ENCODE measurements at regions of chr19 and their contacts with region 1.

Region 1: GRCh38 chr19:41541990-41542584 is 33.9 kb upstream of the CEACAM21 start:
- DNase-seq: peak; percentile 53 to 71 (median 64)
- ATAC-seq: peak; percentile 59
- H3K4me3 ChIP-seq: no peak overlapping the region
- H3K4me3 Mint-ChIP-seq: peak overlapping the region; percentile 51 to 77 (median 62)
- H3K27ac ChIP-seq: peak overlapping the region; percentile 26
- H3K27ac Mint-ChIP-seq: peak overlapping the region; percentile 44 to 97 (median 88)
- H3K4me1 ChIP-seq: peaks cover 38 to 42% of the 10 kb centered on the region in 2 donors
- H3K4me1 Mint-ChIP-seq: peaks cover 38 to 57% (median 52%) of the 10 kb centered on the region in 7 donors
- H3K27me3 ChIP-seq: no peaks in the 10 kb centered on the region
- H3K27me3 Mint-ChIP-seq: no peaks in the 10 kb centered on the region

Region 2: DNA sequence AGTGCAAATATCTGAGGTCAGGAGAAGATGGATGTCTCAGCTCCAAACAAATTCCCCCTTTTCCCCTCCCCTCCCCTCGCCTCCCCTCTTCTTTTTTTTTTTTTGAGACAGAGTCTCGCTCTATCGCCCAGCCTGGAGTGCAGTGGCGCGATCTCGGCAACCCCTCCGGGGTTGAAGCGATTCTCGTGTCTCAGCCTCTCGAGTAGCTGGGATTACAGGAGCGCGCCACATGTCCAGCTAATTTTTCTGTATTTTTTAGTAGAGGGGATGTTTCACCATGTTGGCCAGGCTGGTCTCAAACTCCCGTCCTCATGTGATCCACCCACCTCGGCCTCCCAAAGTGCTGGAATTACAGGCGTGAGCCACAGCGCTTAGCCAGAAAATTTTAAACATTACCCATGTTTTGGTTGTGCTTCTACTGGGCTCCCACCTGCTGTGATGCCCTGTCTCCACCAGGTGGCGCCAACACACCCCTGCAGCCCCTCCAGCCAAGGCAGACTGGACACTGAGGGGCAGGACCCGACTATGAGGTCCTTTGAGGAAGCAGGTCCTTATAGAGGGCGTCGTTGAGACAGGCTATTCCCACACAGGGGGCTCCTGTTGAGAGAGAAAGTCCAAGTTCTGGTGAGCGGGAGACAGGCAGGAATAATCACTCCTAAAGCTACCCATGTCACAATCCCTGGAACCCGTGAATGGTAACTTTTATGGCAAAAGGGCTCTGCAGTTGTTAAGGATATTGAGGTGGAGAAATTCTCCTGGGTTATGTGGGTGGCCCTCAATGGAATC is 92.8 kb before region 1 on chr19:
- CTCF ChIA-PET with region 1: interaction called, 19 read pairs
- POLR2A ChIA-PET with region 1: interaction called, 5 read pairs
- intact Hi-C with region 1: loop called (anchors 1 kb)
- DNase-seq: peak; percentile 48 to 78 (median 67)
- ATAC-seq: peak; percentile 97
- H3K4me3 ChIP-seq: peak overlapping the region; percentile 41
- H3K4me3 Mint-ChIP-seq: peak overlapping the region; percentile 69 to 86 (median 80)
- H3K27ac ChIP-seq: no peak overlapping the region
- H3K27ac Mint-ChIP-seq: peak overlapping the region in 5 of 9 donors; percentile 59 to 80 (median 67)
- H3K4me1 ChIP-seq: peaks cover 0 to 10% of the 10 kb centered on the region in 2 donors
- H3K4me1 Mint-ChIP-seq: peaks cover 7 to 32% (median 13%) of the 10 kb centered on the region in 7 donors
- H3K27me3 ChIP-seq: no peaks in the 10 kb centered on the region
- H3K27me3 Mint-ChIP-seq: peaks cover 0 to 3% (median 0%) of the 10 kb centered on the region in 5 donors

Region 3: DNA sequence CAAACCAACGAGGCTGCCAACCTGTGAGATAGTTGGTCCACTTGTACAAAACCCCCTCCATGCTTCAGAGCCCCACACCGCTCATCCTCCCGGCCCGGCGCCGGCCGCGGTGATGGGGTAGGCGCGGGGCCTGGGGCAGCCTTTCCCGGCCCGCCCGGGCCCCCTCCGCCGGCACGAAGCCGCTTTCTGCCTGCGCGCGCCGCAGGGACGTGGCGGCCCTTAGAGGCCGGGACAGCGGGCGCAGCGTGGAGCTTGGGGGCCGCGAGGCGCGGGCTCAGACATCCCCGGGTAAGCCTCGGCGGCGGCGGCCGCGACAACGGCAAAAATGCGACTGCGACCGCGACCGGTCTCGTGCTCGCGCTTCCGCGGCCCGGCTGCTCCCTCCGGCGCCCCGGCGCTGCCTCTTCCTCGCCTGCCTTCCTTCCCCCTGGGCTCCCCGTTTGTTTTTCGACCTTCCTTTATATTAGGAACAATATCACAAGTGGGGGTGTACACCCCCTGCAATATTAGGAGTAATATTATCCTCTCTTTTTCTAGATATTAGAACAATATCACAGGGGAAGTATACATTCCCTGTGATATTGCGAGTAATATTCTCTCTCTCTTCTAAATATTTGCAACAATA is 20.0 kb before region 1 on chr19:
- CTCF ChIA-PET with region 1: interaction called, 3 read pairs
- POLR2A ChIA-PET with region 1: interaction called, 208 read pairs
- intact Hi-C with region 1: loop called in 1 of 2 experiments (anchors 2 kb)
- DNase-seq: peak in 8 of 9 donors; percentile 31 to 50 (median 44)
- ATAC-seq: peak; percentile 69
- H3K4me3 ChIP-seq: peak overlapping the region; percentile 63
- H3K4me3 Mint-ChIP-seq: peak overlapping the region; percentile 85 to 95 (median 91)
- H3K27ac ChIP-seq: peak overlapping the region; percentile 73
- H3K27ac Mint-ChIP-seq: peak overlapping the region; percentile 85 to 97 (median 92)
- H3K4me1 ChIP-seq: peaks cover 6% of the 10 kb centered on the region in 2 donors
- H3K4me1 Mint-ChIP-seq: peaks cover 20 to 29% (median 25%) of the 10 kb centered on the region in 7 donors
- H3K27me3 ChIP-seq: no peaks in the 10 kb centered on the region
- H3K27me3 Mint-ChIP-seq: peaks cover 0 to 49% (median 17%) of the 10 kb centered on the region in 5 donors

Region 4: DNA sequence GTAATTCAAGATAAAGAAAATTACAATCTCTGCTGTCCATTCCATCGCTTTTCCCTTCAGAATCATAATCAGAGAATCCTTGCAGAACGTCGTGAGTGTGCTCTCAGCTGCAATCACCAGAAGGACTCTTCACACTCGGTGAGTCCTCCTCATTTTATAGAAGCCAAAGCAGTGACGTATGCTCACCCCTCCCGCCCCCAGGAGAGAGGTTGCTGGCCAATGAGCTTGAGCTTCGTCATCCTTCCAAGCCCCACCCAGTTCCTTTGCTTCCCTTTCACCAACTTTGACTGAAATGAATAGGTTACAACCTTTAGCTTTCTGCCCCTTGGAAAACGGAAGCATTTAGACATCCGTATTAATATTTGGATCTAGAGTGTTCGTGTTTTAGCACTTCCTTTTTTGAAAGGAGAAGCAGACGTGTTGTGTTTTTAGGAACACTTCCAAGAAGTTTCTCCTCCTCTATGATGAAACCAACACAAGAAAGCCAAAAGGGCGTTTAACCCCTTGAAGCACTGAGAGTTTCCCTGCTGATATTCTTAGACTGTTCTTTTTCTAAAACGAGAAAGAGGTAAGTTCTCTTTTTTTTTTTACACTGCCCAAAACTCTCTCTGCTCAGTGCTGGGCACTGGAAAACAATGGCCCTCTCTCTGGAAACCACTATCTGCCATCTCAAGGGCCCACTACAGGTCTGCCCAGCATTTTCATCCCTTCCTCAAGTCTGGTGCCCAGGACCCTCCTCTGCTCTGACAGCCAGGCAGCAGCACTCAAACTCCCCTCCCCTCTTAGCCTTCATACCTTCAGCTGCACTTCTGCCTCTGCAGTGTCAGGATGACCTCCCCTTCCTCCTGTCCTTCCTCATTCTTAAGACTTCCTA is 10.4 kb before region 1 on chr19:
- CTCF ChIA-PET with region 1: interaction called, 8 read pairs
- POLR2A ChIA-PET with region 1: interaction called, 208 read pairs
- intact Hi-C with region 1: no loop called
- DNase-seq: peak; percentile 59 to 95 (median 93)
- ATAC-seq: peak; percentile 95
- H3K4me3 ChIP-seq: peak overlapping the region; percentile 46
- H3K4me3 Mint-ChIP-seq: peak overlapping the region; percentile 77 to 98 (median 84)
- H3K27ac ChIP-seq: peak overlapping the region; percentile 75
- H3K27ac Mint-ChIP-seq: peak overlapping the region; percentile 83 to 98 (median 92)
- H3K4me1 ChIP-seq: peaks cover 32 to 46% of the 10 kb centered on the region in 2 donors
- H3K4me1 Mint-ChIP-seq: peaks cover 50 to 70% (median 64%) of the 10 kb centered on the region in 7 donors
- H3K27me3 ChIP-seq: no peaks in the 10 kb centered on the region
- H3K27me3 Mint-ChIP-seq: peaks cover 0 to 7% (median 0%) of the 10 kb centered on the region in 5 donors

Region 5: GRCh38 chr19:41554907-41555306 is 12.8 kb after region 1 on chr19:
- CTCF ChIA-PET with region 1: interaction called, 384 read pairs
- POLR2A ChIA-PET with region 1: interaction called, 518 read pairs
- intact Hi-C with region 1: loop called (anchors 1 kb)
- DNase-seq: peak in 7 of 9 donors; percentile 62 to 78 (median 73)
- ATAC-seq: peak; percentile 88
- H3K4me3 ChIP-seq: peak overlapping the region; percentile 77
- H3K4me3 Mint-ChIP-seq: peak overlapping the region; percentile 39 to 100 (median 97)
- H3K27ac ChIP-seq: peak overlapping the region; percentile 88
- H3K27ac Mint-ChIP-seq: peak overlapping the region; percentile 25 to 97 (median 95)
- H3K4me1 ChIP-seq: peaks cover 50 to 65% of the 10 kb centered on the region in 2 donors
- H3K4me1 Mint-ChIP-seq: peaks cover 43 to 76% (median 69%) of the 10 kb centered on the region in 7 donors
- H3K27me3 ChIP-seq: no peaks in the 10 kb centered on the region
- H3K27me3 Mint-ChIP-seq: no peaks in the 10 kb centered on the region

Region 6: GRCh38 chr19:41753936-41754529 is 211.9 kb after region 1 on chr19:
- CTCF ChIA-PET with region 1: no interaction called
- POLR2A ChIA-PET with region 1: no interaction called
- intact Hi-C with region 1: no loop called
- DNase-seq: peak; percentile 43 to 76 (median 63)
- ATAC-seq: peak; percentile 95
- H3K4me3 ChIP-seq: no peak overlapping the region
- H3K4me3 Mint-ChIP-seq: no peak overlapping the region
- H3K27ac ChIP-seq: no peak overlapping the region
- H3K27ac Mint-ChIP-seq: peak overlapping the region in 2 of 9 donors; percentile 5 to 85
- H3K4me1 ChIP-seq: no peaks in the 10 kb centered on the region
- H3K4me1 Mint-ChIP-seq: peaks cover 4 to 6% (median 5%) of the 10 kb centered on the region in 7 donors
- H3K27me3 ChIP-seq: no peaks in the 10 kb centered on the region
- H3K27me3 Mint-ChIP-seq: peaks cover 20 to 57% (median 30%) of the 10 kb centered on the region in 5 donors

Measured in naive thymus-derived CD4-positive, alpha-beta T cell (primary cell).